ENCODE measurements at regions of chr12 and their contacts with region 1.

Region 1: GRCh38 chr12:34218165-34219045 is 196.1 kb downstream of the ALG10 start:
- DNase-seq: peak; percentile 71
- H3K4me3 ChIP-seq: peak overlapping the region; percentile 45
- H3K27ac ChIP-seq: no peak overlapping the region
- H3K4me1 ChIP-seq: no peaks in the 10 kb centered on the region
- H3K27me3 ChIP-seq: no peaks in the 10 kb centered on the region
- CTCF ChIP-seq: peak; percentile 94

Region 2: DNA sequence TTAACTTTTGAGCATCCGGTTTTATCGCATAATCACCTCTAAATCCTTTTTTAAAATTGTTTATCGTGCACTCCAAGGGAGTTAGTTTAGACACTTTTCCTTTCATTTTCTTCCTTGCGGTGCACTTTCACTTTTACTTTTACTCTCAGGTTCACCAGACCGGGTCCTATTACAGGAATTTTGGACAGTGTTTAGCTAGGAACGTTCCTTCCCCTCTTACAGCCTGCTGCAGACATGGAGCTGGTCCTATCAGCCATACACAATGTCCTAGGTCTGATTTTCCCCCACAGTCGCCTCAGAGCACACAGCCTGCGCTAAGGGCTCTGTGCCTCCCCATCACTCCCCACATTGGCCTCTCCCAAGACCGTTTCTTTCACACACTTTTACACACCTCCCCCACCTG is 92.2 kb before region 1 on chr12:
- CTCF ChIA-PET with region 1: no interaction called
- POLR2A ChIA-PET with region 1: no interaction called
- intact Hi-C with region 1: loop called (anchors 1 kb)
- DNase-seq: no peak
- H3K4me3 ChIP-seq: no peak overlapping the region
- H3K27ac ChIP-seq: no peak overlapping the region
- H3K4me1 ChIP-seq: no peaks in the 10 kb centered on the region
- H3K27me3 ChIP-seq: no peaks in the 10 kb centered on the region
- CTCF ChIP-seq: no peak

Region 3: GRCh38 chr12:34151019-34151418 is 67.4 kb before region 1 on chr12:
- CTCF ChIA-PET with region 1: no interaction called
- POLR2A ChIA-PET with region 1: no interaction called
- intact Hi-C with region 1: loop called (anchors 10 kb)
- DNase-seq: no peak
- H3K4me3 ChIP-seq: no peak overlapping the region
- H3K27ac ChIP-seq: no peak overlapping the region
- H3K4me1 ChIP-seq: no peaks in the 10 kb centered on the region
- H3K27me3 ChIP-seq: no peaks in the 10 kb centered on the region
- CTCF ChIP-seq: no peak

Region 4: DNA sequence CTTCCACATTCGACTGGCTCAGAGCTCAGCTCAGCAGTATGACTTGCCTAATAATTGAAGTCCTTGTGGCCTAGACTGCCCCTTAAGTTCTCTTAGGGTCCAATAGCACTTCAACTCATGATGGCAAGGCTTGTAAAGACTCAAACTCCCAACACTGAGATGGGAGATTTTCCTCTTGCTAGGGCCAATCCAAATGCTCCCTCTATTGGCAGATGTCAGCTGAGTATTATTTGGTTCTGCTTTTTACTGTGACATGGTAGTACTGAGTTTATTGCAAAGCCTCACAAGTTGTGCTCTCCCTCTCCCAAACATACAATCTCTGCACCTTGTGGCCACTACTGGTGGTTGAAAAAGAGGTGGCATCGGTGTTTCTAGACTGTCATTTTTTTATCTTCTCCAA is 31.9 kb before region 1 on chr12:
- CTCF ChIA-PET with region 1: no interaction called
- POLR2A ChIA-PET with region 1: no interaction called
- intact Hi-C with region 1: no loop called
- DNase-seq: no peak
- H3K4me3 ChIP-seq: no peak overlapping the region
- H3K27ac ChIP-seq: no peak overlapping the region
- H3K4me1 ChIP-seq: no peaks in the 10 kb centered on the region
- H3K27me3 ChIP-seq: no peaks in the 10 kb centered on the region
- CTCF ChIP-seq: no peak